Gastrocnemius medialis (tissue), 4 donors: ENCODE measurements at regions of chr18 and their contacts with region 1.

Region 1: DNA sequence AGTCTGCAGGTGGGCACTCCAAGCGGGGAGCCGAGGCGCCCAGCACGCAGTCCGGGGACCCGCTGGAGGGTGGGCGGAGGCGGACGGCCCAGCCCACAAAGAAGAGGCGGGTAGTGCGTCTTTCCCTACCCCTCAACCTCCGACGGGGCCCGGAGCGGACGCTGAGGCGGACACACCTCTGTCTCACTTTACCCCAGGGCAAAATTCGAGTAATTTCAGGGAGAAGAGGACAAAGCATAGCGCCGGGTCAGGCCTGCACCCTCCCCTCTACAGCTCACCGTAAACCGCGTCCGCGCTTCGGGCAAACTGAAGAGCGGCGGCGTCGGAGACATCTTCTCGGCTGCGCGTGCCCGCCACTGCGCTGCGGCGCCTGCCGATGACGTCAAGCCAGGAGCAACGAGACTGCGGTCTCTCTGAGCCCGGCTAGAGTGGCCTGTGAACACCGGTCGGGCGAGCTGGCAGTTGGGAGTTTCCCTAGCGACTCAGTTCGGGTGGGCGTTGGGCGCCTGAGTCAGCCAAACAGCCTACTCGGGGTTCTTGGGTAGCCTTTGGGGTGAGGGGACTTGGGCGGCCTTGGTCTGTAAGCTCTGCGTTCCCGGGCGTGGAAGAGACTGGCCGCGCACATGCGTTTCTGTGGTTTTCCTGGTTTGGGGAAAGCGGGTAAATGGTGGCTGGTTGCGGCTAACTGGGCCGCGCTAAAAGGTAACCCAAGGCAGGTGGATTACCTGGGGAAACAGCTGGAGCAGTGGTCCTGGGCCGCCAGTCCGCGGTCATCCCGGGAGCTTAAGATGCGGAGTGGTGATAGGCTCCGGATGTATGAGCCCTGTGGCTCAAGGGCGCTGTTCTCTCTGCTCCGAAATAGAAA is at the start of gene THOC1:
- DNase-seq: peak; percentile 81 to 83
- ATAC-seq: peak; percentile 93 to 95
- H3K4me3 ChIP-seq: peak within 1 kb of the TSS; percentile 86 to 98 (median 96)
- H3K27ac ChIP-seq: peak within 1 kb of the TSS; percentile 80 to 96 (median 89)
- H3K4me1 ChIP-seq: peaks cover 16 to 26% of the 10 kb centered on the region in 2 donors
- H3K27me3 ChIP-seq: no peaks in the 10 kb centered on the region
- CTCF ChIP-seq: no peak
- POLR2A ChIP-seq: peak; percentile 70 to 71
- total RNA-seq, gene THOC1: 6.4 to 19.4 (median 16.9) TPM

Region 2: GRCh38 chr18:158128-159036 is 109.5 kb before region 1 on chr18 and contains the start of gene USP14:
- in situ Hi-C with region 1: no loop called
- intact Hi-C with region 1: loop called (anchors 1 kb)
- DNase-seq: peak; percentile 95 to 96
- ATAC-seq: peak; percentile 95 to 97
- H3K4me3 ChIP-seq: peak within 1 kb of the TSS; percentile 79 to 95 (median 84)
- H3K27ac ChIP-seq: peak within 1 kb of the TSS; percentile 72 to 89 (median 88)
- H3K4me1 ChIP-seq: peaks cover 14 to 24% of the 10 kb centered on the region in 2 donors
- H3K27me3 ChIP-seq: no peaks in the 10 kb centered on the region
- CTCF ChIP-seq: peak in 2 of 5 experiments; percentile 11 to 13
- POLR2A ChIP-seq: peak; percentile 65 to 72
- total RNA-seq, gene USP14: 23.6 to 48.7 (median 42.2) TPM

Region 3: DNA sequence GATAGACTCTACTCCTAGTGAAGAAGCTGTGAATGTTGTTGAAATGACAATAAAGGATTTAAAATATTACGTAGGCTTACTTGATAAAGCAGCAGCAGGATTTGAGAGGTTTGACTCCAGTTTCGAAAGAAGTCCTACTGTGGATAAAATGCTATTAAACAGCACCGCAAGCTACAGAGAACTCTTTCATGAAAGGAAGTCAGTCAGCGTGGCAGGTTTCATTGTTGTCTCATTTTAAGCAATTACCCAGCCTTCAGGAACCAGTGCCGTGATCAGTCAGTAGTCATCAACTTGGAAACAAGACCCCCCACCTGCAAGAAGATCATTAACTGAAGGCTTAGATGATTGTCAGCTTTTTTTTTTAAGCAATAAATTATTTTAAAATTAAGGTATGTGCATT is 95.6 kb before region 1 on chr18:
- in situ Hi-C with region 1: no loop called
- intact Hi-C with region 1: no loop called
- DNase-seq: no peak
- ATAC-seq: no peak
- H3K4me3 ChIP-seq: no peak overlapping the region
- H3K27ac ChIP-seq: no peak overlapping the region
- H3K4me1 ChIP-seq: peaks cover 0 to 2% of the 10 kb centered on the region in 2 donors
- H3K27me3 ChIP-seq: no peaks in the 10 kb centered on the region
- CTCF ChIP-seq: no peak
- POLR2A ChIP-seq: no peak

Region 4: DNA sequence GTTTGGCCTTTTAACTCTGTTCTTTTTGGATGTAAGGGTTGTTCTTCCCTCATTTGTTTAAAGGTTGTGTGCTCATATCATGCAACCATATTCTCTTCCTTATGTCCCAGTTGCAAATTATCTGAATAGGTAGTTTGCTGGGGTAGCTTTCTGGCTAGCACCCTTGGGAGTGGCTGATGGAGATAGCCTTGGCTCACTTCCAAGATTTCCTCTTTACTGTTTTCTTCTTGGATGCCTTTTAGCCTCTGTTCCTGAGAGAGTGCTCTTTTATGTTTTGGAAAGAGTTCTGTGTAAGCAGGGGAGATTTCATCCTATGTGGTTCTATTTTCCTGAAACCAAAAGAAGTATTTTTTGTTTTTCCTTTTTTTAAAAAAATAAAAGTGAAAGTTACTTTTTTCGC is 84.2 kb before region 1 on chr18:
- in situ Hi-C with region 1: no loop called
- intact Hi-C with region 1: no loop called
- DNase-seq: no peak
- ATAC-seq: no peak
- H3K4me3 ChIP-seq: no peak overlapping the region
- H3K27ac ChIP-seq: no peak overlapping the region
- H3K4me1 ChIP-seq: peaks cover 0 to 1% of the 10 kb centered on the region in 2 donors
- H3K27me3 ChIP-seq: no peaks in the 10 kb centered on the region
- CTCF ChIP-seq: no peak
- POLR2A ChIP-seq: no peak

Region 5: GRCh38 chr18:778194-778927 is 510.4 kb after region 1 on chr18:
- in situ Hi-C with region 1: no loop called
- intact Hi-C with region 1: no loop called
- DNase-seq: no peak
- ATAC-seq: no peak
- H3K4me3 ChIP-seq: no peak overlapping the region
- H3K27ac ChIP-seq: no peak overlapping the region
- H3K4me1 ChIP-seq: peaks cover 10 to 16% of the 10 kb centered on the region in 2 donors
- H3K27me3 ChIP-seq: no peaks in the 10 kb centered on the region
- CTCF ChIP-seq: no peak
- POLR2A ChIP-seq: no peak

Region 6: GRCh38 chr18:812376-813171 is 544.7 kb after region 1 on chr18:
- in situ Hi-C with region 1: no loop called
- intact Hi-C with region 1: loop called (anchors 5 kb)
- DNase-seq: peak; percentile 62 to 77
- ATAC-seq: peak; percentile 69 to 76
- H3K4me3 ChIP-seq: peak overlapping the region; percentile 75 to 96 (median 86)
- H3K27ac ChIP-seq: peak overlapping the region; percentile 93 to 96 (median 94)
- H3K4me1 ChIP-seq: peaks cover 32 to 40% of the 10 kb centered on the region in 2 donors
- H3K27me3 ChIP-seq: no peaks in the 10 kb centered on the region
- CTCF ChIP-seq: no peak
- POLR2A ChIP-seq: peak; percentile 59 to 75